Activated CD4-positive, alpha-beta memory T cell treated with anti-CD3 and anti-CD28 coated beads for 36 hours (primary cell): ENCODE measurements at regions of chr4 and their contacts with region 1.

Region 1: DNA sequence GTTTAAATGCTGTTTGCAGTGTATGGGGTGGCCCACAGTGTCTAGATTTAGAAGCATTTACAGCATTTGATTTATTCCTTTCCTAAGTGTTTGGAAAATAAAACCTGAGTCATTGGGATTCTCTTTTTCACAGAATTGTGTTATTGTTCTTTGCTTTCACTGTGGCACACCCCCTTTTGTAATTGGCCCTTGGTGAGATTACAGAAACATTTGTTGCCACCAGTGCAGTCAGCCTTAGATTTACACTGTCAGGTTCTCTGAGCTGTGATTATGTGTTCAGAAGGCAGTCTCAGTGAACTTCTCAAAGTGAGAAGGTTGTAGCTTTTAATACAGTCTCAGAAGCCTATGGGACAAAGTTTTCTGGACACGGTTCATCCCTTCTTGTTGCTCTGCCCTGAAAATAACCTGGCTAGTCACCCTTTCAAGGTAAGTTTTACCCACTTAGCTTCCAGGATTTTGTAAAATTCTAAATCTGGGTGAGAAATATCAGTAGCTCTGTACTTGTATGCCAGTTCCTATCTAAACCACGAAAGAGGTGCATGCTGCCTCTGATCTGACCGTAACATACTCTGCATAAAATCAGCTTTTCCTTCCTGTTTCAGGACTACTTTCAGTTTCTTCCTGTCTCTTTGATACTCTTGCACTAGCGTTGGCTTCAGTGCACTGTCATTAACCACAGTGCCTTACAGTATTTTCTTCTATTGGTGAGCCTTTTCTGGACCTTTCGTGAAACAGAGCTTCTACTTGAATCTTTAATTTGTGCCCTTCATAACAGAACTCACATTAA is 12.6 kb downstream of the RUFY3 start:
- DNase-seq: peak; percentile 40
- H3K4me3 Mint-ChIP-seq: peak overlapping the region; percentile 60
- H3K27ac Mint-ChIP-seq: peak overlapping the region; percentile 72
- H3K4me1 Mint-ChIP-seq: peaks cover 32% of the 10 kb centered on the region
- H3K27me3 Mint-ChIP-seq: no peaks in the 10 kb centered on the region

Region 2: GRCh38 chr4:70704331-70705145 is 29.8 kb before region 1 on chr4:
- CTCF ChIA-PET with region 1: interaction called, 20 read pairs
- POLR2A ChIA-PET with region 1: interaction called, 19 read pairs
- intact Hi-C with region 1: loop called (anchors 1 kb)
- DNase-seq: peak; percentile 75
- H3K4me3 Mint-ChIP-seq: peak overlapping the region; percentile 85
- H3K27ac Mint-ChIP-seq: peak overlapping the region; percentile 80
- H3K4me1 Mint-ChIP-seq: peaks cover 25% of the 10 kb centered on the region
- H3K27me3 Mint-ChIP-seq: no peaks in the 10 kb centered on the region

Region 3: GRCh38 chr4:70721747-70722146 is 12.6 kb before region 1 on chr4 and contains the start of gene RUFY3:
- CTCF ChIA-PET with region 1: interaction called, 3 read pairs
- POLR2A ChIA-PET with region 1: interaction called, 4 read pairs
- intact Hi-C with region 1: loop called (anchors 1 kb)
- DNase-seq: no peak
- H3K4me3 Mint-ChIP-seq: no peak within 1 kb of the TSS
- H3K27ac Mint-ChIP-seq: no peak within 1 kb of the TSS
- H3K4me1 Mint-ChIP-seq: peaks cover 24% of the 10 kb centered on the region
- H3K27me3 Mint-ChIP-seq: no peaks in the 10 kb centered on the region
- total RNA-seq, gene RUFY3: 15.8 to 17.2 TPM

Region 4: DNA sequence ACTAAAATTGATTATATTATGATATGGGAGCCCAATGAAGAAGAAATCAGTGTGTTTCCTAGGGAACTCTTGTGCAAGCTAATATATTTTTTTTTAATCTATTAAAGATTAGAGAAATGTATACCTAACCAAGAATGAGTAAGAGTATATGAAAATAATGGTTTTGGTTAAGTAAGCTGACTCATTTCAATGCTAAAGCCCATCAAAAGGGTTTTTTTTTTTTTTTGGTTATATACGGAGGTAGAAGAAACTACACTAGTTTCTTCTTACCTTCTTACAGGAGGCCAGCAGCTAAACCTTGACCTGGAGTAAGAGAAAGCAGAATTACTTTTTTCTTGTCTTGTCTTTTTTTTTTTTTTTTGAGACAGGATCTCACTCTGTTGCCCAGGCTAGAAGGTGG is 15.0 kb after region 1 on chr4:
- CTCF ChIA-PET with region 1: interaction called, 6 read pairs
- POLR2A ChIA-PET with region 1: interaction called, 3 read pairs
- intact Hi-C with region 1: loop called (anchors 2 kb)
- DNase-seq: no peak
- H3K4me3 Mint-ChIP-seq: no peak overlapping the region
- H3K27ac Mint-ChIP-seq: no peak overlapping the region
- H3K4me1 Mint-ChIP-seq: peaks cover 11% of the 10 kb centered on the region
- H3K27me3 Mint-ChIP-seq: no peaks in the 10 kb centered on the region

Region 5: GRCh38 chr4:70801265-70801809 is 67.0 kb after region 1 on chr4:
- CTCF ChIA-PET with region 1: interaction called, 3 read pairs
- POLR2A ChIA-PET with region 1: interaction called, 11 read pairs
- intact Hi-C with region 1: loop called (anchors 1 kb)
- DNase-seq: peak; percentile 60
- H3K4me3 Mint-ChIP-seq: no peak overlapping the region
- H3K27ac Mint-ChIP-seq: no peak overlapping the region
- H3K4me1 Mint-ChIP-seq: peaks cover 10% of the 10 kb centered on the region
- H3K27me3 Mint-ChIP-seq: no peaks in the 10 kb centered on the region